CD14-positive monocyte (primary cell): ENCODE measurements at regions of chr1 and their contacts with region 1.

Region 1: DNA sequence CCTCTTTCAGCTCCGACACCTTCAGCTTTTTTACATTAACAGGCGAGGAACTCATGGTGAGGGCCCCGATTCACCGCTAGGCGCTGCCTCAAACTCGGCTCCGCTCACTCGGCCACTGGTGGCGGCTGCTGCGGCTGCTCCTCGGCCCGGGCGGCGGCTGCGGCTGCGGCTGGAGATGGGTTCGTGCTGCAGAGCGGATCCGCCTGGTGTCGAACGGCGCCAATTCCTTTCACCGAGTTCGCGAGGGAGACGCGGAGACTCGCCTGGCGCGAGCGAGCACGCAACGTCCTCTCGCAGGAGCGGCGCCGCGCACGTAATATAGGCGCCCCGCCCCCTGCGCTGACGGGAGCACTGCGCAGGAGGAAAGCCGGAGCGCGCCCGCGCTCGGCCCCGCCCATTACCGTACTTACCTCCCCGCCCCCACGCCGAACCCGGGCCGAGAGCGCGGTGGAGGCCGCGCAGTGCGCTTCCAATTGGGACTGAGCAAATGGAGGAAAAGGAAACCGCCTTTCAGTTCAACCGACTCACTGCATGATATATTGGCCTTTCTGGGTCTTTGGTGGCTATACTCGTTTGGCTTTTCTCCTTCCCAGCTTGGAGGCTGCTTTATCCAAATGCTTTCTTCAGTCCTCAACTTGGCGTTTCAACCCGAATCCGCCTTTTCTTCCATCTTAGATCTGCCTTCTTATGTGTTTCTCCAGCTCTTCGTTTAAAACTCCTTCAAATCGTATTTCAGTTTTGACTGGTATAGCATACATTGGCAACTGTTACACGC is at the start of gene HNRNPU:
- DNase-seq: peak; percentile 94 to 98 (median 96)
- H3K4me3 ChIP-seq: peak within 1 kb of the TSS; percentile 88 to 99 (median 97)
- H3K4me3 Mint-ChIP-seq: peak within 1 kb of the TSS; percentile 93 to 95
- H3K27ac ChIP-seq: peak within 1 kb of the TSS; percentile 95 to 99
- H3K27ac Mint-ChIP-seq: peak within 1 kb of the TSS; percentile 97 to 99 (median 98)
- H3K4me1 ChIP-seq: peaks cover 35 to 43% of the 10 kb centered on the region in 2 donors
- H3K4me1 Mint-ChIP-seq: peaks cover 36% of the 10 kb centered on the region
- H3K27me3 ChIP-seq: no peaks in the 10 kb centered on the region
- H3K27me3 Mint-ChIP-seq: peaks cover 0 to 1% (median 0%) of the 10 kb centered on the region in 3 donors
- CTCF ChIP-seq: peak; percentile 24
- polyA plus RNA-seq, gene HNRNPU: 71.5 to 197 (median 143) TPM

Region 2: GRCh38 chr1:244652699-244653466 is 211.6 kb before region 1 on chr1 and contains the start of gene DESI2:
- intact Hi-C with region 1: loop called in 1 of 2 experiments (anchors 10 kb)
- DNase-seq: peak; percentile 99 to 100 (median 99)
- H3K4me3 ChIP-seq: peak within 1 kb of the TSS; percentile 69 to 89 (median 80)
- H3K4me3 Mint-ChIP-seq: peak within 1 kb of the TSS; percentile 76 to 93
- H3K27ac ChIP-seq: peak within 1 kb of the TSS; percentile 66 to 89
- H3K27ac Mint-ChIP-seq: peak within 1 kb of the TSS; percentile 72 to 91 (median 82)
- H3K4me1 ChIP-seq: peaks cover 22 to 24% of the 10 kb centered on the region in 2 donors
- H3K4me1 Mint-ChIP-seq: peaks cover 17% of the 10 kb centered on the region
- H3K27me3 ChIP-seq: no peaks in the 10 kb centered on the region
- H3K27me3 Mint-ChIP-seq: peaks cover 0 to 4% (median under 1%) of the 10 kb centered on the region in 3 donors
- CTCF ChIP-seq: peak; percentile 68
- polyA plus RNA-seq, gene DESI2: 10.5 to 12.0 (median 11.2) TPM

Region 3: GRCh38 chr1:244815600-244816099 is 48.8 kb before region 1 on chr1:
- intact Hi-C with region 1: no loop called
- DNase-seq: peak; percentile 86 to 90 (median 89)
- H3K4me3 ChIP-seq: peak overlapping the region; percentile 69 to 83 (median 73)
- H3K4me3 Mint-ChIP-seq: peak overlapping the region; percentile 84 to 93
- H3K27ac ChIP-seq: peak overlapping the region; percentile 87 to 100
- H3K27ac Mint-ChIP-seq: peak overlapping the region; percentile 94 to 98 (median 97)
- H3K4me1 ChIP-seq: peaks cover 19 to 26% of the 10 kb centered on the region in 2 donors
- H3K4me1 Mint-ChIP-seq: peaks cover 37% of the 10 kb centered on the region
- H3K27me3 ChIP-seq: no peaks in the 10 kb centered on the region
- H3K27me3 Mint-ChIP-seq: peaks cover 0 to 8% (median 2%) of the 10 kb centered on the region in 3 donors
- CTCF ChIP-seq: no peak

Region 4: GRCh38 chr1:244835276-244836134 is 28.9 kb before region 1 on chr1 and contains the start of gene COX20:
- intact Hi-C with region 1: loop called (anchors 1 to 2 kb)
- DNase-seq: peak; percentile 77 to 89 (median 77)
- H3K4me3 ChIP-seq: peak within 1 kb of the TSS; percentile 88 to 95 (median 95)
- H3K4me3 Mint-ChIP-seq: peak within 1 kb of the TSS; percentile 93
- H3K27ac ChIP-seq: peak within 1 kb of the TSS; percentile 93 to 95
- H3K27ac Mint-ChIP-seq: peak within 1 kb of the TSS; percentile 97 to 100 (median 99)
- H3K4me1 ChIP-seq: peaks cover 19 to 35% of the 10 kb centered on the region in 2 donors
- H3K4me1 Mint-ChIP-seq: peaks cover 41% of the 10 kb centered on the region
- H3K27me3 ChIP-seq: no peaks in the 10 kb centered on the region
- H3K27me3 Mint-ChIP-seq: no peaks in the 10 kb centered on the region
- CTCF ChIP-seq: no peak
- polyA plus RNA-seq, gene COX20: 15.8 to 21.6 (median 17.9) TPM

Region 5: DNA sequence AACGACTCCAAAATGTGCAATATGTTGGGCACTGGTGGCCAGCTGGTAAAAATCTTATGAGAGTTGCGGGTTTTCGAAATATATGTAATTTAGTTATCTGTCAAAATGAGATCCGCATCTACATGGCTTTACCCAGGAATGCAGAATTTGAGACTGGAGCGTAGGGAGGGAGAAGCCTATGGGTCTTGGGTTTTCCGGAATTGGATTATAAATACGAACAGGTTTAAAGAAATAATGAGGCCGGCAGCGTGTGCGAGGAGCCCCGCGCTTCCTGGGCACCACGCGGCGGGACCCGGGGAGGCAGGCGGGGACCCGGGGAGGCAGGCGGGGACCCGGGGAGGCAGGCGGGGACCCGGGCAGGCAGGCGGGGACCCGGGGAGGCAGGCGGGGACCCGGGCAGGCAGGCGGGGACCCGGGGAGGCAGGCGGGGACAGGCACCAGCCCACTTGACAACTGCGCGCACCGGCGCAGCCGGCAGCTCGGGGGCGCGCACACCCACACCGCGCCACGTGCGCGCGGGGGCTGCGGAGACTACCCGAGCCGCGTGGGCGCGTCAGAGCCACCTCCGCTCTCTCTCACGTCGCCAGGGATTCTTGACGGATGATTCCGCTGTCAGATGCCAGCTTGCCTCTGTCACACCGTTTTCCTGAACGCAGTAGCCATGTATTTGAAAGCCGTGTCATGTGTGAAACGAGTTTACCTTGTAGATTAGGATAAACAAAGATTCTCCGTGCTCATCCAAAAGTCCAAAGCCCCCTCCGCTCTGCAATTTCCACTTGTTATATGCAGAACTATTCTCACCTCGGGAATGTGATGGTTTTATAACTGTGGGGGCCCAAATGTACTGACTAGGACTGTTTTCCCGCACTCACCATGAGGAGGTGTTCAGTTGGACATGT is 54.2 kb after region 1 on chr1:
- intact Hi-C with region 1: loop called (anchors 5 to 10 kb)
- DNase-seq: peak; percentile 22 to 43 (median 33)
- H3K4me3 ChIP-seq: peak overlapping the region; percentile 51 to 77 (median 72)
- H3K4me3 Mint-ChIP-seq: peak overlapping the region; percentile 92 to 97
- H3K27ac ChIP-seq: no peak overlapping the region
- H3K27ac Mint-ChIP-seq: peak overlapping the region in 6 of 7 donors; percentile 9 to 83 (median 57)
- H3K4me1 ChIP-seq: peaks cover 29 to 39% of the 10 kb centered on the region in 2 donors
- H3K4me1 Mint-ChIP-seq: peaks cover 29% of the 10 kb centered on the region
- H3K27me3 ChIP-seq: no peaks in the 10 kb centered on the region
- H3K27me3 Mint-ChIP-seq: no peaks in the 10 kb centered on the region
- CTCF ChIP-seq: no peak

Region 6: GRCh38 chr1:245045087-245045881 is 180.8 kb after region 1 on chr1:
- intact Hi-C with region 1: loop called (anchors 5 to 10 kb)
- DNase-seq: no peak
- H3K4me3 ChIP-seq: no peak overlapping the region
- H3K4me3 Mint-ChIP-seq: no peak overlapping the region
- H3K27ac ChIP-seq: no peak overlapping the region
- H3K27ac Mint-ChIP-seq: peak overlapping the region in 1 of 7 donors; percentile 72
- H3K4me1 ChIP-seq: no peaks in the 10 kb centered on the region
- H3K4me1 Mint-ChIP-seq: peaks cover 18% of the 10 kb centered on the region
- H3K27me3 ChIP-seq: no peaks in the 10 kb centered on the region
- H3K27me3 Mint-ChIP-seq: peaks cover 0 to 1% (median 0%) of the 10 kb centered on the region in 3 donors
- CTCF ChIP-seq: no peak

Region 7: GRCh38 chr1:245051349-245052221 is 187.1 kb after region 1 on chr1:
- intact Hi-C with region 1: loop called in 1 of 2 experiments (anchors 10 kb)
- DNase-seq: peak; percentile 65 to 86 (median 85)
- H3K4me3 ChIP-seq: peak overlapping the region; percentile 33 to 70 (median 42)
- H3K4me3 Mint-ChIP-seq: peak overlapping the region; percentile 78 to 91
- H3K27ac ChIP-seq: peak overlapping the region; percentile 71 to 85
- H3K27ac Mint-ChIP-seq: peak overlapping the region; percentile 88 to 97 (median 95)
- H3K4me1 ChIP-seq: peaks cover 60% of the 10 kb centered on the region in 2 donors
- H3K4me1 Mint-ChIP-seq: peaks cover 70% of the 10 kb centered on the region
- H3K27me3 ChIP-seq: no peaks in the 10 kb centered on the region
- H3K27me3 Mint-ChIP-seq: no peaks in the 10 kb centered on the region
- CTCF ChIP-seq: no peak